ENCODE measurements at regions of chr15 and their contacts with region 1.

Region 1: GRCh38 chr15:91055548-91056331 is 33.3 kb upstream of the VPS33B start:
- H3K4me3 Mint-ChIP-seq: peak overlapping the region; percentile 37
- H3K27ac Mint-ChIP-seq: no peak overlapping the region
- H3K4me1 Mint-ChIP-seq: peaks cover 14% of the 10 kb centered on the region
- H3K27me3 Mint-ChIP-seq: peaks cover 52% of the 10 kb centered on the region

Region 2: GRCh38 chr15:91224755-91225380 is 169.1 kb after region 1 on chr15:
- intact Hi-C with region 1: loop called (anchors 2 kb)
- H3K4me3 Mint-ChIP-seq: no peak overlapping the region
- H3K27ac Mint-ChIP-seq: no peak overlapping the region
- H3K4me1 Mint-ChIP-seq: no peaks in the 10 kb centered on the region
- H3K27me3 Mint-ChIP-seq: peaks cover 20% of the 10 kb centered on the region

Region 3: DNA sequence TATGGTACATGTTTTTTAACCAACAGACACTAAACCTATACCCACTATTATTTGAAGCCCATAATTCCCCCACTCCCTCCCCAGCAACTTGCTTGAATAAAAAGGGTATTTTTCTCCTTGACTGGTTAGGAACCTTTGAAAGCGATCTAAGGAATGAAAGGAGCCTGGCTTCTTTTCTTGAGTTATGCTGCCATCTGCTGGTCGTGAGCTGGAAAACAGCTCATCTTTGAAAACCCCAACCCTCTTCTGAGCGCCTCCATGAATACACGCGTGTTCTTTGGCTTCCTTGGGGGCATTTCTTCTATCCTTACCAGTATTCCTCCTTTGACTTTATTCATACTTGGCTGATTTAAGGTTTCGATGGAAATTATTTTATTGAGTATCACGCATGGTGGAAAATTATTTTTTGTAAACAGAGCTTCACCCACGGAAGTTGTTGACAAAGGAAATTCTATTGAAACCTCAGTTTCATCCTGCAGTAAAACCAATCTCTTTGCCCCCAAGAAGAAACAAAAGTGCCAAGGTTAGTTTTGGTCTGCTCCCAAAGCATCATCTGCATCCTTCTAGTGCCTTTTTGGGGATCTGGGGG is 215.9 kb after region 1 on chr15:
- intact Hi-C with region 1: loop called (anchors 1 kb)
- H3K4me3 Mint-ChIP-seq: no peak overlapping the region
- H3K27ac Mint-ChIP-seq: no peak overlapping the region
- H3K4me1 Mint-ChIP-seq: no peaks in the 10 kb centered on the region
- H3K27me3 Mint-ChIP-seq: peaks cover 17% of the 10 kb centered on the region

Measured in dendritic cell treated with granulocyte-macrophage colony-stimulating factor and Interleukin-4, amounts not matched to agents 40 ng/mL and 50 ng/mL, for 4 days (primary cell).